ENCODE measurements at regions of chr5 and their contacts with region 1.

Region 1: GRCh38 chr5:10308844-10309243 is 1.1 kb upstream of the CMBL start:
- DNase-seq: no peak
- H3K4me3 ChIP-seq: no peak overlapping the region
- H3K27ac ChIP-seq: peak overlapping the region in 3 of 4 donors; percentile 81 to 89 (median 88)
- H3K4me1 ChIP-seq: peaks cover 0 to 39% (median 26%) of the 10 kb centered on the region in 4 donors
- H3K27me3 ChIP-seq: no peaks in the 10 kb centered on the region
- CTCF ChIP-seq: no peak
- EP300 ChIP-seq: no peak
- POLR2A ChIP-seq: no peak

Region 2: GRCh38 chr5:10328323-10328722 is 19.5 kb after region 1 on chr5:
- in situ Hi-C with region 1: no loop called
- intact Hi-C with region 1: loop called (anchors 1 kb)
- DNase-seq: no peak
- H3K4me3 ChIP-seq: no peak overlapping the region
- H3K27ac ChIP-seq: no peak overlapping the region
- H3K4me1 ChIP-seq: peaks cover 8 to 35% (median 21%) of the 10 kb centered on the region in 4 donors
- H3K27me3 ChIP-seq: no peaks in the 10 kb centered on the region
- CTCF ChIP-seq: no peak
- EP300 ChIP-seq: no peak
- POLR2A ChIP-seq: no peak